ENCODE measurements at regions of chr12 and their contacts with region 1.

Region 1: GRCh38 chr12:78392918-78393317 is 471.7 kb upstream of the SYT1 start:
- DNase-seq: peak; percentile 40
- H3K4me3 ChIP-seq: no peak overlapping the region
- H3K27ac ChIP-seq: no peak overlapping the region
- H3K4me1 ChIP-seq: peaks cover 17% of the 10 kb centered on the region
- CTCF ChIP-seq: peak; percentile 74

Region 2: DNA sequence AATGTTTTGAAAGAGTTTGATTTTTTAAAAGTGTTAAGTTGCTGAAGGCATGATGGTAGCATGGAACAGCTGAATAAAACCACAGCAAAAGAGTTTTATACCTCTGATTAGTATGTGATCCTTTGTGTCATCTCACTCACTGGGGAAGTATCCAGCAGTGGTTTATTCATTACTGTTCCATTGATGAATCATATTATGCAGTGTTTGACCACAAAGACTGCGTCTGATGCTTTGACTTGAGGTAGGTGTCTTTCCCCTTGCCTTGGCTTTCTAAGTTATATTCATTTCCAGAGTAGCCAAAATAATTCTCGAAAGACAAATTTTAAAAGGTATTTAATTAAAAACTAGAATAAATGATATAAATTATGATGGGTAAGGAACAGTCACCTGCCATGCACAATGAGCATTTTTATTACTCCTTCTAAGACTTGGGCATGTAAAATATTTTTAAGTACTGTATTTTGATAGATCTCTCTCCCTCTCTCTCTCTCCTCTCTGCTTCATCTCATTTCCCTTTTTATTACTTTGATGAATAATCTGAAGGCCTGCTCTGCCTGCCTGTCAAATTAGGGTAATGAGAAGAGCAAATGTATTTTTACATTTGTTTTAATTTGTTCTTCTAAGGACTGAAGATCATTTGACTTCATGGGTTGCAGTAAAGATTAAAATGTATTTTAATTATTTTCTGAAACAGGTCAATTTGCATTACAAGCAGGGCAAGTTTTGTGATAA is 397.3 kb before region 1 on chr12:
- CTCF ChIA-PET with region 1: no interaction called
- POLR2A ChIA-PET with region 1: no interaction called
- intact Hi-C with region 1: loop called (anchors 5 kb)
- DNase-seq: no peak
- H3K4me3 ChIP-seq: no peak overlapping the region
- H3K27ac ChIP-seq: no peak overlapping the region
- H3K4me1 ChIP-seq: peaks cover 45% of the 10 kb centered on the region
- CTCF ChIP-seq: no peak

Region 3: GRCh38 chr12:78470354-78471195 is 77.7 kb after region 1 on chr12:
- CTCF ChIA-PET with region 1: no interaction called
- POLR2A ChIA-PET with region 1: interaction called, 5 read pairs
- intact Hi-C with region 1: loop called (anchors 5 kb)
- DNase-seq: peak; percentile 41
- H3K4me3 ChIP-seq: no peak overlapping the region
- H3K27ac ChIP-seq: no peak overlapping the region
- H3K4me1 ChIP-seq: no peaks in the 10 kb centered on the region
- CTCF ChIP-seq: peak; percentile 80

Region 4: GRCh38 chr12:78568321-78569020 is 175.6 kb after region 1 on chr12:
- CTCF ChIA-PET with region 1: no interaction called
- POLR2A ChIA-PET with region 1: interaction called, 3 read pairs
- intact Hi-C with region 1: loop called (anchors 5 kb)
- DNase-seq: no peak
- H3K4me3 ChIP-seq: no peak overlapping the region
- H3K27ac ChIP-seq: no peak overlapping the region
- H3K4me1 ChIP-seq: no peaks in the 10 kb centered on the region
- CTCF ChIP-seq: no peak